ENCODE measurements at regions of chr6 and their contacts with region 1.

Region 1: GRCh38 chr6:83067448-83068413 is at the start of gene DOP1A:
- DNase-seq: peak; percentile 44
- H3K4me3 ChIP-seq: peak within 1 kb of the TSS; percentile 87
- CTCF ChIP-seq: peak; percentile 95

Region 2: GRCh38 chr6:82247634-82248232 is 820.0 kb before region 1 on chr6 and contains the start of gene IBTK:
- CTCF ChIA-PET with region 1: interaction called, 95 read pairs
- POLR2A ChIA-PET with region 1: no interaction called
- DNase-seq: no peak
- H3K4me3 ChIP-seq: peak within 1 kb of the TSS; percentile 77
- CTCF ChIP-seq: no peak

Region 3: GRCh38 chr6:83038246-83038645 is 29.5 kb before region 1 on chr6:
- CTCF ChIA-PET with region 1: interaction called, 17 read pairs
- POLR2A ChIA-PET with region 1: no interaction called
- DNase-seq: no peak
- H3K4me3 ChIP-seq: no peak overlapping the region
- CTCF ChIP-seq: no peak

Region 4: GRCh38 chr6:83114164-83114563 is 46.4 kb after region 1 on chr6:
- CTCF ChIA-PET with region 1: interaction called, 44 read pairs
- POLR2A ChIA-PET with region 1: no interaction called
- DNase-seq: no peak
- H3K4me3 ChIP-seq: no peak overlapping the region
- CTCF ChIP-seq: no peak

Region 5: GRCh38 chr6:83169511-83169910 is 101.8 kb after region 1 on chr6:
- CTCF ChIA-PET with region 1: interaction called, 28 read pairs
- POLR2A ChIA-PET with region 1: no interaction called
- DNase-seq: no peak
- H3K4me3 ChIP-seq: no peak overlapping the region
- CTCF ChIP-seq: no peak

Region 6: DNA sequence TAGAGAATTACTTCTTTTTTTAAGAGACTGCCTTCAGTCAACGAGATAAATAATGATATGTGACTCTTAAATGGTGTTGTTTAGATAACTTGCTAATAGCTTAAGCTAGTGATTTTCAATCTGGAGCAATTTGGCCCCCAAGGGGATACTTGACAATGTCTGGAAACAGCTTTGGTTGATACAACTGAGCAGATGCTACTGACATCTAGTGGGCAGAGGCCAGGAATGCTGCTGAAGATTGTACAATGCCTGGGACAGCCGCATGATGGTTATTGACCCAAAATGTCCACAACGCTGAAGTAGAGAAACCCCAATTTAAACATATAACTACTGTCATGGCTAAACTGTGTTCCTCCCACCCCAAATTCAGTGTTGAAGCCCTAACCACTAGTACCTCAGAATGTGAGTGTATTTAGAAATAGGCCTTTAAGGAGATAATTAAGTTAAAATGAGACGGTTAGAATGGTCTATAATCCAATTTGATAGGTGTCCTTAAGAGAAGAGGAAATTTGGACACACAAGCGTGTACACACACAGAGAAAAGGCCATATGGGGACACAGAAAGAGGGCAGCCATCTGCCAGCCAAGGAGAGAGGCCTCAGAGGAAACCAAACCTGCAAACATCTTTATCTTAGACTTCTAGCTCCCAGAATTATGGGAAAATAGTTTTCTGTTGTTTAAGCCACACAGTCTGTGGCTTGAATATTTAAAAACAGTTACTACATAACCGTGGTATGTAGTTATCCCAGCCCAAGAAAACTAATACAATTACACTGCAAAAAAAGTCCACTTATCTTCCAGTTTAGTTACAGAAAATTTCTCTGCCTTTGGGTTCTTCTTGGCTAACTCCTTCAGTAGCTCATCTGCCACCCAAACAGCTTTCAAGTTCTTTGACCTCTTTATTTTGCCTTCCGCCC is 147.7 kb after region 1 on chr6:
- CTCF ChIA-PET with region 1: interaction called, 493 read pairs
- POLR2A ChIA-PET with region 1: interaction called, 6 read pairs
- DNase-seq: no peak
- H3K4me3 ChIP-seq: no peak overlapping the region
- CTCF ChIP-seq: peak; percentile 86

Region 7: GRCh38 chr6:83424392-83425018 is 356.8 kb after region 1 on chr6:
- CTCF ChIA-PET with region 1: interaction called, 31 read pairs
- POLR2A ChIA-PET with region 1: no interaction called
- DNase-seq: no peak
- H3K4me3 ChIP-seq: no peak overlapping the region
- CTCF ChIP-seq: no peak